ENCODE measurements at regions of chr9 and their contacts with region 1.

Region 1: GRCh38 chr9:36258208-36258988 is at the start of gene GNE:
- DNase-seq: peak; percentile 99
- ATAC-seq: peak; percentile 97 to 99 (median 98)
- H3K4me3 ChIP-seq: peak within 1 kb of the TSS; percentile 75 to 99 (median 83)
- H3K27ac ChIP-seq: peak within 1 kb of the TSS; percentile 93 to 100 (median 98)
- H3K4me1 ChIP-seq: peaks cover 0 to 21% (median 8%) of the 10 kb centered on the region in 12 donors
- H3K27me3 ChIP-seq: no peaks in the 10 kb centered on the region
- CTCF ChIP-seq: no peak
- POLR2A ChIP-seq: peak; percentile 8 to 94
- total RNA-seq, gene GNE: 10.4 to 22.0 (median 11.8) TPM

Region 2: DNA sequence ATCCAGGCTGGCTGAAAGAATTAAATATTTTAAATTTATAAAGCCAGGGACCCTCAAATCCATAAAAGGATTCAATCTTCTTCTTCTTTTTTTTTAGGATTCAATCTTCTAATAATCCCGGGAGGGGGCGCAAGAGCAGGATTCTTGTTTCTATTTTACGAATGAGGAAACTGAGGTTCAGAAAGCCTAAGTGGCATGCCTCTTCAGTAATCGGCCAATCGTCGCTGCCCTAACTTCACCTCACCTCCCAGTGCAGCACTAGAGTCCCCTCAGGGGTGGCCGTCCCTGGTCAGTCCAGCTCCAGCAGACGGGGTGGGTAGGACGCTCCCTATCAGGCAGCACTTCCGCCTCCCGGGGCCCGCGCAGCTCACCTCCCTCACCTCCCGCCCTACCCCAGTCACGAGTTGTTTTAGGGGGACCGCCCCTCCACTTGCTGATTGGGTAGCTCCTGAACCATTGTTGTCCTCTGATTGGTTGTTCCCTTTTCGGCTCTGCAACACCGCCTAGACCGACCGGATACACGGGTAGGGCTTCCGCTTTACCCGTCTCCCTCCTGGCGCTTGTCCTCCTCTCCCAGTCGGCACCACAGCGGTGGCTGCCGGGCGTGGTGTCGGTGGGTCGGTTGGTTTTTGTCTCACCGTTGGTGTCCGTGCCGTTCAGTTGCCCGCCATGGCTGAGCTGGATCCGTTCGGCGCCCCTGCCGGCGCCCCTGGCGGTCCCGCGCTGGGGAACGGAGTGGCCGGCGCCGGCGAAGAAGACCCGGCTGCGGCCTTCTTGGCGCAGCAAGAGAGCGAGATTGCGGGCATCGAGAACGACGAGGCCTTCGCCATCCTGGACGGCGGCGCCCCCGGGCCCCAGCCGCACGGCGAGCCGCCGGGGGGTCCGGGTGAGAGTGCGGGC is 67.8 kb before region 1 on chr9 and contains the start of gene CLTA:
- intact Hi-C with region 1: loop called in 2 of 10 experiments (anchors 1 to 2 kb)
- DNase-seq: peak; percentile 95 to 98 (median 98)
- ATAC-seq: peak; percentile 98 to 100 (median 99)
- H3K4me3 ChIP-seq: peak within 1 kb of the TSS; percentile 69 to 99 (median 88)
- H3K27ac ChIP-seq: peak within 1 kb of the TSS; percentile 66 to 97 (median 92)
- H3K4me1 ChIP-seq: peaks cover 16 to 45% (median 40%) of the 10 kb centered on the region in 12 donors
- H3K27me3 ChIP-seq: no peaks in the 10 kb centered on the region
- CTCF ChIP-seq: peak; percentile 12 to 70 (median 57)
- POLR2A ChIP-seq: peak; percentile 62 to 92
- total RNA-seq, gene CLTA: 43.8 to 123 (median 61.8) TPM

Region 3: DNA sequence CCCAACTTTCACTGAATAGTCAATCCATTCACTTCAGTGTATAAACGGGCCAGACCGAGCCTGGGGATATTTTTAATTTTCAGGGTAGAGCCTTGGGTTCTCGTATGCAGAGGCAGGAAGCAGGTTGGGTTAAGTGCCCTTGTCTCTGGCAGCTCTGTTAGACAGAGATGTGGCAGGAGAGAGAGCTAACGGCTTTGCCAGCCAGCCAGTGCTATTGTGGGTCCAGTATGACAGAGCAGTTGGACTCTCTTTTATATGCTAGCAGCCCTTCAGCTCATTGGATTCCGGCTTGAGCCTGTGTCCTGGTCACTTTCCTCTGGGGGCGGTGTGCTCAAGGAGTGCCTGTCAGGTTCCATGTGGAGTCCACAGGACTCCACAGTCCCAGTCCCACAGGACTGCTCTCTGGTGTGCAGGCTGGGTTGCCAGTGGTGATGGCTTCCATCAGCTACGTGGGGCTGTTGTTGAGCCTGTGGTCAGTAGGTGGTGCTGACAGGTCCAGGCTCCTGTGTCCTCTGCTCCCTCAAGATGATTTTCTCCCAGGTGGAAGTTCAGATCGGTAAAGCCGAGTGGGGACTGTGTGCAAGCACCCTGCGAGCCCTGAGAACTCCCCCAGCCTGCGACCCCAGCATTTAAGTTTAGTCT is 53.4 kb before region 1 on chr9:
- intact Hi-C with region 1: loop called in 2 of 10 experiments (anchors 5 to 10 kb)
- DNase-seq: peak in 2 of 5 donors; percentile 42 to 49
- ATAC-seq: peak; percentile 43 to 82 (median 74)
- H3K4me3 ChIP-seq: no peak overlapping the region
- H3K27ac ChIP-seq: peak overlapping the region in 4 of 12 donors; percentile 26 to 53 (median 34)
- H3K4me1 ChIP-seq: peaks cover 0 to 51% (median 36%) of the 10 kb centered on the region in 12 donors
- H3K27me3 ChIP-seq: no peaks in the 10 kb centered on the region
- CTCF ChIP-seq: peak in 5 of 12 donors; percentile 10 to 40 (median 29)
- POLR2A ChIP-seq: no peak

Region 4: GRCh38 chr9:36218411-36218901 is 39.9 kb before region 1 on chr9:
- intact Hi-C with region 1: loop called in 2 of 10 experiments (anchors 5 kb)
- DNase-seq: no peak
- ATAC-seq: peak in 1 of 4 donors; percentile 12
- H3K4me3 ChIP-seq: no peak overlapping the region
- H3K27ac ChIP-seq: no peak overlapping the region
- H3K4me1 ChIP-seq: peaks cover 0 to 35% (median 25%) of the 10 kb centered on the region in 12 donors
- H3K27me3 ChIP-seq: no peaks in the 10 kb centered on the region
- CTCF ChIP-seq: no peak
- POLR2A ChIP-seq: no peak

Region 5: GRCh38 chr9:36487482-36488388 is 229.3 kb after region 1 on chr9:
- intact Hi-C with region 1: loop called in 1 of 10 experiments (anchors 2 kb)
- DNase-seq: peak; percentile 93 to 96 (median 94)
- ATAC-seq: peak; percentile 96 to 99 (median 98)
- H3K4me3 ChIP-seq: peak overlapping the region; percentile 15 to 99 (median 86)
- H3K27ac ChIP-seq: peak overlapping the region; percentile 86 to 97 (median 92)
- H3K4me1 ChIP-seq: peaks cover 3 to 34% (median 19%) of the 10 kb centered on the region in 12 donors
- H3K27me3 ChIP-seq: no peaks in the 10 kb centered on the region
- CTCF ChIP-seq: peak in 4 of 12 donors; percentile 3 to 33 (median 12)
- POLR2A ChIP-seq: peak in 1 of 2 donors; percentile 88

Measured in heart left ventricle (tissue), 16 donors.